ENCODE measurements at regions of chr12 and their contacts with region 1.

Region 1: DNA sequence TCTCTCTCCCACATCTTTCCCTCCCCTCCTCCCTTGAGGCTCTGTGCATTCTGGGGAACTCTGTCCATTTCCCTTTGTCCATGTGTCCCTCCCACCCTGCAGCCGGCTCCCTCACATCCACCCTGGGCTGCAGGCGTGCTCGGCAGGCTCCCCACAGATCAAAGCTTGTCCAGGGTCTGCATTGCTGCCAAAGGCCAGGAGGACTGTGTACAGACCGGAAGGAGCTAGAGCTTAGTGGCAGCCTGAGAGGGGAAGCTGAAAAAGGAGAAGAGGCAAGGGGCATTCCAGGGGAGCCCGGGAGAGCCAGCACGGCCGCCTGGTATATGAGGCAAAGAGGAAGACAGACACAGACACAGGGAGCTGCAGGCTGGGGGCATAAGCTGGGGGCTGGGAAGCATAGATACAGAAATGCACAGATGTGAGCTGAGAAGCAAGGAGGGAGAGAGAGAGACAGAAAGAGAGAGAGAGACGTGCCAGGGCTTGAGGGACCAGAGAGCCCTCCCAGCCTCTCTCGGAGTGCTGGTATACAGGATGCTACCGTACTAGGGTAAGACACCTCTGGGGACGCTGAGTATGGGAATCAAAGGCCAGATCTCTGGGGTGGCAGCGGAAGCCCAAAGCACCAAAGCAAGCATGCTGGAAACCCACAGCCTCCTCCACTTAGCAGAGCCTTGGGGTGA is 3.3 kb downstream of the CD4 start:
- DNase-seq: peak; percentile 49
- H3K4me3 Mint-ChIP-seq: peak overlapping the region; percentile 99
- H3K27ac Mint-ChIP-seq: peak overlapping the region; percentile 95
- H3K4me1 Mint-ChIP-seq: peaks cover 53% of the 10 kb centered on the region
- H3K27me3 Mint-ChIP-seq: no peaks in the 10 kb centered on the region

Region 2: GRCh38 chr12:6723607-6724396 is 68.9 kb before region 1 on chr12 and contains the start of gene COPS7A:
- intact Hi-C with region 1: loop called (anchors 2 kb)
- DNase-seq: peak; percentile 98
- H3K4me3 Mint-ChIP-seq: peak within 1 kb of the TSS; percentile 99
- H3K27ac Mint-ChIP-seq: peak within 1 kb of the TSS; percentile 98
- H3K4me1 Mint-ChIP-seq: peaks cover 17% of the 10 kb centered on the region
- H3K27me3 Mint-ChIP-seq: no peaks in the 10 kb centered on the region
- total RNA-seq, gene COPS7A: 33.0 and 35.6 TPM in 2 replicates

Region 3: DNA sequence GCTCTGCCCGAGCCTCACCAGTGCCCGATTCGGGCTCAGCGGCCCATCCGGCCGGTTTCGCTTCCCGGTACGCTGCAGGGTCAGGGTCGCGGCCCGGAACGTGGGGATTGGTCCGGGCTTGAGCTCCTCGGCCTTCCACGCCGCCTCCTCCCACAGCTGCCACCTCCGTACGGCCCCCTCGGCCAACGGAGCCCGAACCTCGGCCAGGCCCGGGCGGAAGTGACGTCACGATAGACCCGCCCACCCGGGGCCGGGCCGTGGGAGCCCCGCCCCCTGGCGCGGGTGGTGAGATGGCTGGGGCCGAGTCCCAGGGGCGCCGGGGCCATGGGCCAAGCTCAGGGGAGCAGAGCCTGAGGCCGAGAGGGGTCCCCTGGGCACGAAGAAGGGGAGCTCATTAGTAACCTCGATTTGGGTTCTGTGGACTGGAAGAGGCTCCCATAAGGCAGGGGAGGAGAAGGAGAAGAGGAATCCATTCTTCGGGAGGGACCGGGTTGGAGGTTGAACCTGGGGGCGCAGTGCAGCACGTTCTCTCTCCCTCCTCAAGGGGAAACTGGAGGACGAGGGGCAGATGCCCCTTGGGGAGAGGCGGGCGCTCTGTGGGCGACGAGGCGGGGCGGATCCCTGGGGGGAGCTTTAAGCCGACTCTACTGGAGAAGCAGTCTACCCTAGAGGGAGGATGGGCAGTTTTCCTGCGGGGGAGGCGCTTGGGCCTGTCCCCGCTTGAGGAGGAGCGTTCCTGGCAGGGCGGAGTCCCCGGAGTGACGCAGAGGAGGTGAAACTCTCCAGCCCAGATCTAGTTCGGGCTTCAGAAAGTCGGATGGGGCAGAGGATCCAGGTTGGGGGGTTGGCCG is 39.5 kb before region 1 on chr12 and contains the start of gene MLF2:
- intact Hi-C with region 1: loop called (anchors 1 kb)
- DNase-seq: peak; percentile 97
- H3K4me3 Mint-ChIP-seq: peak within 1 kb of the TSS; percentile 94
- H3K27ac Mint-ChIP-seq: peak within 1 kb of the TSS; percentile 96
- H3K4me1 Mint-ChIP-seq: peaks cover 32% of the 10 kb centered on the region
- H3K27me3 Mint-ChIP-seq: no peaks in the 10 kb centered on the region
- total RNA-seq, gene MLF2: 162 and 172 TPM in 2 replicates

Region 4: GRCh38 chr12:6778574-6779550 is 13.8 kb before region 1 on chr12:
- intact Hi-C with region 1: loop called (anchors 1 kb)
- DNase-seq: peak; percentile 81
- H3K4me3 Mint-ChIP-seq: peak overlapping the region; percentile 71
- H3K27ac Mint-ChIP-seq: peak overlapping the region; percentile 66
- H3K4me1 Mint-ChIP-seq: peaks cover 77% of the 10 kb centered on the region
- H3K27me3 Mint-ChIP-seq: no peaks in the 10 kb centered on the region

Region 5: DNA sequence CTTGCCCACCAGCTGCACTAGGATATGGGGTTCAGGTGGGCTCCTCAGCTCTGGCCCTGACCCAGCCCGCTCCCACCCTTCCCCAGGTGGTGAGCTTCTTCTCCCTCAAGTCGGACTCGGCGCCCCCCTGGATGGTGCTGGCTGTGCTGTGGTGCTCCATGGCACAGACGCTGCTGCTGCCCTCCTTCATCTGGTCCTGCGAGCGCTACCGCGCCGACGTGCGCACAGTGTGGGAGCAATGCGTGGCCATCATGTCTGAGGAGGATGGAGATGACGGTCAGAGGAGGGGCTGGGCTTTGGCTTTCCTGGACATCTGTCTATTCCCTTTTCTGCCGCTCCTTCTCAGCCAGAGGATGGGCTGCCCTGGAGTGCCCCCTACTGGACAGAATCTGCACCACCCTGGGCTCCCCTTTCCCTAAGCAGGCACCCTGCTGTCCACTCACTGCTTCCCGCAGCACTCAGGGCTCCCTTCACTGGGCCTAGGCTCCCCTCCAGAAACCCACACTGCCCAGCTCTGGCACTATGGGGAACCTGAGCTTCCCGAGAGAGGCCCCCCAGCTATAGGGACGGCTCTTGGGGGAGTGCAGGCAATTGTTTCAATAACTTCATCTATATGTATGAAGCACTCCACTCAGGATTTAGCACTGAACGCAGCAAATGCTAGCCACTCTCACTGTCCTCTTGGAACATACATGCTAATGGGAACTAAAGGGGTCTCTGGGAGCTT is 32.9 kb after region 1 on chr12:
- intact Hi-C with region 1: loop called (anchors 5 kb)
- DNase-seq: peak; percentile 71
- H3K4me3 Mint-ChIP-seq: no peak overlapping the region
- H3K27ac Mint-ChIP-seq: no peak overlapping the region
- H3K4me1 Mint-ChIP-seq: peaks cover 32% of the 10 kb centered on the region
- H3K27me3 Mint-ChIP-seq: peaks cover 43% of the 10 kb centered on the region

Region 6: DNA sequence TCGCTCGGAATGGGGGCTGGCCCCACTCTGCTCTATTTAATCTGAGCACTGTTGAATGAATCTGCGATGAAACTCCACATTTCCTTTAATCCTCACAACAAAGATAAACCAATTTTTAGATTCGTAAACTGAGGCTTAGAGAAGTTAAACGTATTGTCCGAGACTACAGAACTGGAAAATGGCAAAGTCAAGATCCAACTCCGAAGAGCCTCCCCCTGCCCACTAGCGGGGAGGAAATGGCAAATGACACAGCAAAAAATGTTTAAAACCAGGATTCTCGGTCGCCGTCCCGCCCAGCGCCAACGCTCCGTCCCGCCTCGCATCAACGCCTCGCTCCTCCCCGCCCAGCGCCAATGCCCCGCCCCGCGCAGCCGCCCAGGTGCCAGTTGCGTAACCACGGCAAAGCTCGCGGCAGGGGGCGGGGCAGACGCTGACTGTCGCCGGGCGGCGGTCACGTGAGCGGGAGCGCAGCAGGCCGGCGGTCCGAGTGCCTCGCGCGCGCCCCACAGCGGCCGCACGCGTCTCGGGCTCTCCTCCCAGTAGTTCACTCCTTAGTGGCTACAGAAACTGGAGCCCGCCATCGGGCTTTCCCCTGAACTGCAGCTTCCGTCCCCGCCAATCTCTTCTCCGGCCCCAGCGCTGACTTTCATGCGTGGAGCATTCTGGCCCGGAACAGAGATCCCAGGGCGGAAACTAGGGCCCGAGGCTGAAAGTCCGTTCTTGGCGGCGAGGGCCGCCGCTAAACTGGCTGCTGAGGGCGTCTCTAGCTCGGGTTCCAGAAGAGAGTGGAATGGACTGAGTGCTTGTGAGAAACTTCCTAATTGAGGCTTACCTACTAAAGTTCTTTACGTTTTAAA is 98.4 kb after region 1 on chr12:
- intact Hi-C with region 1: loop called (anchors 5 kb)
- DNase-seq: peak; percentile 98
- H3K4me3 Mint-ChIP-seq: peak overlapping the region; percentile 80
- H3K27ac Mint-ChIP-seq: peak overlapping the region; percentile 92
- H3K4me1 Mint-ChIP-seq: peaks cover 13% of the 10 kb centered on the region
- H3K27me3 Mint-ChIP-seq: no peaks in the 10 kb centered on the region

Region 7: DNA sequence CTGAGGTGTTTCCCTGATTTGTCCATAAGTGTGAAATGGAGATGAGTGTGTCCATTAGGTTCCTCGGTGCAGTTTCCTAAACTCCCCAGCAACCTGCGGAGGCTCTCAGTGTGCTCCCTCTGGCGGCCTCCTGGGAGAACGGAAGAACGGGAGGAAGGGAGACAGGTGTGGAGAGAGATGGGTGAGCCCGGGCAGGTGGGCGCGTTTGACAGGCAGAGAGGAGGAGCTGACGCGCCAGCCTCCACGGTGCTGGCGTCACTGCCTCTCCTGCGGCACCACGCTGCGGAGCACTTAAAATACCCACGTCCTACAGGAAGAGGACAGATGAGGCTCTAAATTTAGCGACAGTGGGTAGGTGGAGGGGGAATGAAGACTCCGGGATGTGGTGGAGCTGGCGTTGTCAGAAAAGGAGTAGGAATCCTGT is 370.0 kb after region 1 on chr12:
- intact Hi-C with region 1: no loop called
- DNase-seq: no peak
- H3K4me3 Mint-ChIP-seq: no peak overlapping the region
- H3K27ac Mint-ChIP-seq: no peak overlapping the region
- H3K4me1 Mint-ChIP-seq: peaks cover 7% of the 10 kb centered on the region
- H3K27me3 Mint-ChIP-seq: peaks cover 15% of the 10 kb centered on the region